GM13976 (cell line): ENCODE measurements at regions of chr13 and their contacts with region 1.

Region 1: DNA sequence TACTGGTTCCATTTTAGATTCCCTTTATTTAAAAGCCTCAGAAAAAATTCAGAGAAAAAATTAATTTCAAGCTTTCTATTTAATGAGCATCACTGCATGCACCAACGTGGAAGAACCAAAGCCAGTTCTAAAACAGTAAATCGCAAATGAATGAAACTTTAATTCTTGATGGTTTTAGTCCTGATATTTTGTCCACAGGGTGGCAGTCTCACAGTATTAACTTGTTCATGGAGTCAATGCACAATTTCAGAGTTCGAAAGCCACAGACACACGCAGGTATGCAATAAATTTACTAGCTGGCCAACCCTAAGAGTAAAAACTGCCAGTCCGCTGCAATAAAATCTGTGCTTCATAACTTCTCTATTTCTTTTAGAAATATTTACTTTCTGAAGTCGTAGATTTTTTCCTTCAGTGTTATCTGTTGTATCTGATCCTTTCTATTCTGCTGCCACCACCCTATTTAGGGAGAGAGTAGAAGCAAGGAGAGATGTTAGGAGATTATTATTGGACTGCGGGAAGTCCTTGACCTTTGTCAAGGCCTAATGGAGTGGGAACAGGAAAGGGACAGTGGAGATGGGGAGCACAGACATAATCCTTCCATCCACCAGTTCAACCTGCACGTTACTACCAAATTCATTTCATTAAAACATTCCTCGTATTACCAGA is 7.0 kb upstream of the WBP4 start:
- DNase-seq: no peak
- CTCF ChIP-seq: peak; percentile 22

Region 2: GRCh38 chr13:40624383-40624782 is 430.0 kb before region 1 on chr13:
- in situ Hi-C with region 1: no loop called
- DNase-seq: no peak
- CTCF ChIP-seq: no peak

Region 3: DNA sequence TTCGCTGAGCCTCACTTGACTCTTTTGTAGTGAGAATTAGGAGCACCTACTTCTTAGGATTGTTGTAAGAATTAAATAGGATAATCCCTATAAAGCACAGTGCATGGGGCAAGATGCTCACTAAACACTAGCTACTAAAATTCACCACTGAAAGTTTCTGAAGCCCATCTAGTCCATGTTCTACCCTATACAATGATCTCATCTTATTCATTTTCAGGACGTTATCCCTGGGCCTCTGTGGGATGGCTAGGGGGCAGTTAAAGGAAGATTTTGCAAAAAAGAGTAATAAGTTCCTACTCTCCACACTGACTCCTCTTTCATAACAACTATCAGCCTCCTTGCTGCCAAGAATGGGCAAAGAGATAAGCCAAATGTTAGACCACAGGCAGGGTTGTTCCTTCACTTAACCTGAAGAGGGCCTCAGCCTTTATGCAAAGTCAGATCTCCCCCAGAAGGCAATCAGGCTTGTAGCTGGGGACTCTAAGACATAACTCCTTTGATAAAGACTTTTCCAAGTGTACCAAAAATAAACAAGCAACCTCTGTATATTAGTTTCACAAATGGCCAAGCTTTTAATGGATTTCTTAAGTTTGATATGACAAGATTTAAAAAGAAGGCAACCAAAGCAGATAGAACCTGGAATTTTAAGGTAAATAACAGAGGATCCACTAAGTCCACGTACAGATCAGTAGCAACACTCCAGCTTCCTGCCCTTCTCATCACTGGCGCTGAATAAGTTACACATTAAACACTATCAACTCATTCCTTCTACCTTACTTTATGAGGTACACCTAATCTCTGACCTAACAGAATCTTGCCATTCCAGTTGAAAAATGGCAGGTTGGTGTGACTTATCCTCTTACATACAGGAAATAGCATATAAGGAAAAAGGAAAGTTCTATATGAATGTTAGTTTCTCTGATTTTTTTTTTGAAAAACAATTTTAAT is 79.6 kb before region 1 on chr13:
- in situ Hi-C with region 1: loop called (anchors 10 kb)
- DNase-seq: no peak
- CTCF ChIP-seq: peak; percentile 54